ENCODE measurements at regions of chr3 and their contacts with region 1.

Region 1: DNA sequence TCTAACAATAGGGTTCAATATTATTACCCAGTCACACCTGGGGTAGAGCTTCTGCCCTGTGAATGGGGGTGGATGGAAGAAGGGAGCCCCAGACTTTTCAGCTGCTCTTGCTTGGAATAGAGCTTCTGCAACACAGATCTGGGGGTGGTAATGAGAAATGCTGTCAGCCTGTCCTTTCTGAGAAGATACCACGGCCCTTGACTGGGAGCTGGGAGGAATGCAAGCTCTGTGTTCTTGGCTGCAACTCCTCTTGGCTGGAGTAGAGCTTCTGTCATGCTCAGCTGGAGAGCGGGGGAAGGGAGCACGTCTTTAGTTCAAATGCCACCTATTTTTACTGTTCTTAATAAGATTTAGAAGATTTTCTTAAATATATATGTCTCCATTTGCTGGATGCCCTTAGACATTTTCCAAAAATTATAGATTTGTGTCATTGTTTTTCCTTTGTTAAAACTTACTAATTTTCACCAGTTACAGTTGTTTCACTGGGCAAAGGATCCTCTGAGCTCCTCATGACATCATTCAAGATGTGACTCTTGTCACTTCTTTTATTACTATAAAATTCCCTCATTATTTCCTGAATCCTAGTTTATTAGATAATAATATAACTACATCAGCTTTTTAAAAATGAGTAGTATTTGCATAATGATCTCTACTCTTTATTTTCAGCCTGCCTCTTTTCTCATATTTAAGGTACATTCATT is 180.0 kb upstream of the TGFBR2 start:
- DNase-seq: peak in 1 of 2 donors; percentile 34
- H3K4me3 ChIP-seq: no peak overlapping the region
- H3K27ac ChIP-seq: no peak overlapping the region
- H3K4me1 ChIP-seq: no peaks in the 10 kb centered on the region
- H3K27me3 ChIP-seq: no peaks in the 10 kb centered on the region
- CTCF ChIP-seq: no peak
- POLR2A ChIP-seq: no peak

Region 2: DNA sequence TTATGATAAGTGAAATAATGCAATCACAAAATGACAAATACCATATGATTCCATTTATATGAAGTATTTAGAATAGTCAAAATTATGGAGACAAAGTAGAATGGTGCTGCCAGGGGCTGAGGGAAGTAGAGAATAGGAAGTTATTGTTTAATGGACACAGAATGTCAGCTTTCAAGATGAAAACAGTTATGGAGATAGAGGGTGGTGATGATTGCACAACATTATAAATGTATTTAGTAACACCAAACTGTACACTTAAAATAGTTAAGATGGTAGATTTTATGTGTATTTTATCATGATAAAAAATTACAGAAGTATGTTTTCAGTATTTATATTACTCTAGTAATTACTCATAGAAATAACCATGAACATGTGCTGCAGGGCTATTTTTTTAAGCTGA is 1977.0 kb before region 1 on chr3:
- intact Hi-C with region 1: no loop called
- DNase-seq: no peak
- H3K4me3 ChIP-seq: no peak overlapping the region
- H3K27ac ChIP-seq: no peak overlapping the region
- H3K4me1 ChIP-seq: no peaks in the 10 kb centered on the region
- H3K27me3 ChIP-seq: no peaks in the 10 kb centered on the region
- CTCF ChIP-seq: no peak
- POLR2A ChIP-seq: no peak

Region 3: GRCh38 chr3:31166249-31166885 is 739.9 kb after region 1 on chr3:
- intact Hi-C with region 1: no loop called
- DNase-seq: no peak
- H3K4me3 ChIP-seq: no peak overlapping the region
- H3K27ac ChIP-seq: no peak overlapping the region
- H3K4me1 ChIP-seq: no peaks in the 10 kb centered on the region
- H3K27me3 ChIP-seq: no peaks in the 10 kb centered on the region
- CTCF ChIP-seq: no peak
- POLR2A ChIP-seq: no peak

Region 4: DNA sequence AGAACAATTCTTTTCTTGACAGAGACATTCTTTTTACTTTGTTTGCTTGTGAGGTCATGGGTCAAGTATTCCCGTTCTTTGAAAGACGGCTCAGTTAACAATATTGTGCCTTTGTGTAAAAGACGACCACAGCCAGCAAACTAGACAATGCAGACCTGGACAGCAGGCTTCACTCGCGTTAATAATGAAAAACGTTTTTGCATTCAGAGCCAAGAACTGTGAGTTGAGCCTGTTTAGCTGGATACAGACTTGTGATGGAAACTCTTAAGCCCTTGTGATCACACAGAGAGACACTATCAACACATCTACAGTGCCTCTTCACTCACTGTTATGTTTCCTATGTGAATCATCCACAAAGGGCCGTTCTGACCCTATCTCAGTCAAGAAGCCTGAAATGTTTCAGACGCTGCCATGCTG is 1927.9 kb after region 1 on chr3:
- intact Hi-C with region 1: loop called (anchors 10 kb)
- DNase-seq: no peak
- H3K4me3 ChIP-seq: no peak overlapping the region
- H3K27ac ChIP-seq: peak overlapping the region; percentile 66 to 71
- H3K4me1 ChIP-seq: peaks cover 0 to 4% of the 10 kb centered on the region in 2 donors
- H3K27me3 ChIP-seq: no peaks in the 10 kb centered on the region
- CTCF ChIP-seq: no peak
- POLR2A ChIP-seq: no peak